SK-N-SH (cell line): ENCODE measurements at regions of chr17 and their contacts with region 1.

Region 1: DNA sequence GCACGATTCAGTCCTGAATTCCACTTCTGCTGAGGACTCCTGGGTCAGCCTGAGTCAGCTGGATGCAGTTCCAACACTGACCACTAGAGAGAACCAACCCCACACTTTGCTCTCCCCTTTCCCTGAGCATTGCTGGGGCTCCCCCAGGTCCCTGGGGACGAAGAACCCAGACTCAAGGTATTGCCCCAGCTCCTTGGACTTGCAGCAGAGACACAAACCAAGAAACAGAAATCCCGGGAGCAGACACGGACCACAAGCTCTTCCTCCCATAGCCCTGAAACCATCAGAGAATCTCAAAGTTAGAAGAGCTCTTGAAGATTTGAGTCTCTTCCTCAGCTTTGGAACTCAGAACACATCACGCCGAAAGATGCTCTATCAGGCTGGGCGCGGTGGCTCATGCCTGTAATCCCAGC is 678 bp upstream of the GH1 start:
- DNase-seq: peak; percentile 89
- H3K4me3 ChIP-seq: no peak overlapping the region
- H3K27ac ChIP-seq: no peak overlapping the region
- H3K4me1 ChIP-seq: no peaks in the 10 kb centered on the region
- H3K27me3 ChIP-seq: peaks cover 31% of the 10 kb centered on the region
- CTCF ChIP-seq: peak; percentile 96
- EP300 ChIP-seq: no peak
- RAD21 ChIP-seq: peak; percentile 92

Region 2: GRCh38 chr17:63189082-63189481 is 730.2 kb before region 1 on chr17:
- CTCF ChIA-PET with region 1: no interaction called
- POLR2A ChIA-PET with region 1: no interaction called
- DNase-seq: no peak
- H3K4me3 ChIP-seq: no peak overlapping the region
- H3K27ac ChIP-seq: peak overlapping the region in 1 of 2 experiments; percentile 24; a peak in 2 of 4 replicates
- H3K4me1 ChIP-seq: peaks cover 0 to 2% of the 10 kb centered on the region in 2 experiments; a peak in 2 of 4 replicates
- H3K27me3 ChIP-seq: no peaks in the 10 kb centered on the region
- CTCF ChIP-seq: no peak
- EP300 ChIP-seq: no peak
- RAD21 ChIP-seq: no peak

Region 3: GRCh38 chr17:63939884-63940283 is 20.6 kb after region 1 on chr17:
- CTCF ChIA-PET with region 1: interaction called, 90 read pairs
- POLR2A ChIA-PET with region 1: no interaction called
- DNase-seq: no peak
- H3K4me3 ChIP-seq: no peak overlapping the region
- H3K27ac ChIP-seq: no peak overlapping the region
- H3K4me1 ChIP-seq: no peaks in the 10 kb centered on the region
- H3K27me3 ChIP-seq: peaks cover 6% of the 10 kb centered on the region; the same call in 1 of the 2 replicates
- CTCF ChIP-seq: no peak
- EP300 ChIP-seq: no peak
- RAD21 ChIP-seq: no peak

Region 4: GRCh38 chr17:63966646-63967264 is 47.4 kb after region 1 on chr17:
- CTCF ChIA-PET with region 1: interaction called, 20 read pairs
- POLR2A ChIA-PET with region 1: no interaction called
- DNase-seq: no peak
- H3K4me3 ChIP-seq: no peak overlapping the region
- H3K27ac ChIP-seq: no peak overlapping the region
- H3K4me1 ChIP-seq: no peaks in the 10 kb centered on the region
- H3K27me3 ChIP-seq: no peaks in the 10 kb centered on the region
- CTCF ChIP-seq: no peak
- EP300 ChIP-seq: no peak
- RAD21 ChIP-seq: no peak

Region 5: DNA sequence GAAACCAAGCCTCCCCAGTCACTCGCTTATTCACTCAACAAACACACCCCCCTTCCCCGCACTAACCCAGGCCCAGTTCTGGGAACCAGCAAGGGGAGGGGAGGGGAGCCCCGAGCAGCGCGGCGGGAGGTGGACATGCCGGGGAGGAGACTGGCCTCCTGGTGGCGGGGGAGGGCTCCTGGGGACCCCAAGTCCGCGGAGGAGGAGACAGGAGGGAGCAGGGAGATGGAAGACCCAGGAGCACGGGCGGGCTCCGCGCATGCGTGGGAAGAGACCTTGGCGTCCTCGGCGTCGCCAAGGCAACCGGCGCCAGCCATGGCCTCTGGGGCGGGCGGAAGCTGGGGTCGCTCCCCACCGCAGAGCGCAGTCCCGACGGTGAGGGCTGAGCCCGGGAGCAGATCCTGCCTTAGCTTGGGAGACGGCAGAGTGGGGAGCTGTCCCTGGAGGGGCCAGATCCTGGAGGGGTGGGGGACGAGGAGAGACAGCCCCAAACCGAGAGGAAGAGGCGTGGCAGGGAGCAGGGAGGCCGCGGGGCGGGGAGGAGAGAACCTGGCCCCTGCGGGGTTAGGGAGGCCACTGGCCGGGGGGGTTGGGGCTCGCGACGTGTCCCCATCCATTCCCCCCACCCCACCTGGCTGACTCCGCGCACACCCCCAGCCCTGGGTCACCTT is 78.9 kb after region 1 on chr17 and contains the start of gene PRR29:
- CTCF ChIA-PET with region 1: interaction called, 61 read pairs
- POLR2A ChIA-PET with region 1: no interaction called
- DNase-seq: peak; percentile 100
- H3K4me3 ChIP-seq: peak within 1 kb of the TSS; percentile 71 to 94
- H3K27ac ChIP-seq: peak within 1 kb of the TSS in 1 of 2 experiments; percentile 50; a peak in 1 of 4 replicates
- H3K4me1 ChIP-seq: peaks cover 0 to 13% of the 10 kb centered on the region in 2 experiments; a peak in 2 of 4 replicates
- H3K27me3 ChIP-seq: peaks cover 23% of the 10 kb centered on the region
- CTCF ChIP-seq: no peak
- EP300 ChIP-seq: no peak
- RAD21 ChIP-seq: no peak
- polyA plus RNA-seq, gene PRR29: 2.5 and 2.7 TPM in 2 replicates

Region 6: GRCh38 chr17:64123114-64123513 is 203.8 kb after region 1 on chr17:
- CTCF ChIA-PET with region 1: interaction called, 12 read pairs
- POLR2A ChIA-PET with region 1: no interaction called
- DNase-seq: no peak
- H3K4me3 ChIP-seq: no peak overlapping the region
- H3K27ac ChIP-seq: no peak overlapping the region
- H3K4me1 ChIP-seq: peaks cover 7 to 8% of the 10 kb centered on the region in 2 experiments; a peak in 3 of 4 replicates
- H3K27me3 ChIP-seq: no peaks in the 10 kb centered on the region
- CTCF ChIP-seq: no peak
- EP300 ChIP-seq: no peak
- RAD21 ChIP-seq: no peak